ENCODE measurements at regions of chr15 and their contacts with region 1.

Region 1: GRCh38 chr15:70670680-70671079 is 92.7 kb downstream of the UACA start:
- DNase-seq: peak in 2 of 5 donors; percentile 14 to 18
- H3K4me3 ChIP-seq: no peak overlapping the region
- H3K4me3 Mint-ChIP-seq: no peak overlapping the region
- H3K27ac ChIP-seq: no peak overlapping the region
- H3K27ac Mint-ChIP-seq: no peak overlapping the region
- H3K4me1 ChIP-seq: peaks cover 26% of the 10 kb centered on the region
- H3K4me1 Mint-ChIP-seq: peaks cover 15 to 25% (median 18%) of the 10 kb centered on the region in 4 donors
- H3K27me3 ChIP-seq: no peaks in the 10 kb centered on the region
- H3K27me3 Mint-ChIP-seq: peaks cover 2 to 5% of the 10 kb centered on the region in 2 donors

Region 2: DNA sequence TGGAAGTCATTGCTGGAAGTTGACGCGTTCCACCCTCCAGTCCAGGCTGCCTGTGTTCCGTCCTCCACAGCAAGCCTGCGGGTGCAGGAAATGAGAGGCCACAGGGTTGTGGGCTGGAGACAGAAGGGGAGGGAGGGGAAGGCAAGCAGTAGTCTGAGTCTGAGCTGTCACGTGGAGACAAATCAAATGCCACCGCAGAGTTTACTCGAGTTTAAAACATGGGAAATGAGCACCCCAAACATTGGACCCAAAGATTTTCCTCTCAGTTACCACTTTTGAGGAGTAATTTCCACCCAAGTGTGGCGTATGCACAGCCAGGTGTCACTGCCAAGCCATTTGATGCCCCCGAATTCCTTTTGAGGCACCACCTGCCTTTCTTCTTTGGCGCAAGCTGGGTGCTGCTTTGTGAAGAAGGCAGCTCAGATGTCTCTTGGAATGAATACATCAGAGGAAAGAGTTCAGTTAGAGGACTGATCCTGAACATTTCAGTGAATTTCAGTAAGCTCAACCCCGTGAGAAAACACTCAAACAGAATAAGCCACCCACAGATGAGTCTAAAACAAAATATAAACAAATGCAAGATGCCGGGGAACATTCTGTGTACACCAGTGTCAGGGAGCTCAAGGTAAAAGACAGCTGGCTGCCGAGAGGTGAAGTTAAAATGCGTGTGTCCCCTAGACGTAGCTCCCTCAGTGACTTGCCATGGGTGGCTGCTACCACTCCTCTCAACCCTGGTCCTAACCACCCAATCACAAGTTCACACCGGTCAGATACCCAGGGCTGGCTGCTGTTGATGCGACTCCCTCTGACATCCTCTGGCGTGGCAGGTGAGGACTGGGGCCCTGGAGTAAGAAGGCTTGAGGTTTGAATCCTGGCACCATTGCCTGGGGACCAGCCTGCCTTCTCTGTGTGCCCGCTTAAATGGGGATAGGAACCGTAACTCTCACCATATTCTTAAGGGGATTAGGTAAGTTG is 111.1 kb before region 1 on chr15:
- CTCF ChIA-PET with region 1: no interaction called
- POLR2A ChIA-PET with region 1: no interaction called
- intact Hi-C with region 1: loop called (anchors 10 kb)
- DNase-seq: peak; percentile 72 to 87 (median 75)
- H3K4me3 ChIP-seq: peak overlapping the region; percentile 28 to 31
- H3K4me3 Mint-ChIP-seq: peak overlapping the region in 1 of 8 donors; percentile 6
- H3K27ac ChIP-seq: no peak overlapping the region
- H3K27ac Mint-ChIP-seq: peak overlapping the region in 4 of 7 donors; percentile 26 to 82 (median 32)
- H3K4me1 ChIP-seq: peaks cover 64% of the 10 kb centered on the region
- H3K4me1 Mint-ChIP-seq: peaks cover 0 to 13% (median 4%) of the 10 kb centered on the region in 4 donors
- H3K27me3 ChIP-seq: no peaks in the 10 kb centered on the region
- H3K27me3 Mint-ChIP-seq: no peaks in the 10 kb centered on the region

Region 3: GRCh38 chr15:70722266-70723121 is 51.8 kb after region 1 on chr15:
- CTCF ChIA-PET with region 1: interaction called, 43 read pairs
- POLR2A ChIA-PET with region 1: interaction called, 3 read pairs
- intact Hi-C with region 1: loop called (anchors 10 kb)
- DNase-seq: peak in 4 of 5 donors; percentile 25 to 39 (median 30)
- H3K4me3 ChIP-seq: no peak overlapping the region
- H3K4me3 Mint-ChIP-seq: no peak overlapping the region
- H3K27ac ChIP-seq: no peak overlapping the region
- H3K27ac Mint-ChIP-seq: no peak overlapping the region
- H3K4me1 ChIP-seq: no peaks in the 10 kb centered on the region
- H3K4me1 Mint-ChIP-seq: peaks cover 0 to 2% (median 0%) of the 10 kb centered on the region in 4 donors
- H3K27me3 ChIP-seq: no peaks in the 10 kb centered on the region
- H3K27me3 Mint-ChIP-seq: peaks cover 13 to 14% of the 10 kb centered on the region in 2 donors

Region 4: GRCh38 chr15:70810916-70811578 is 140.4 kb after region 1 on chr15:
- CTCF ChIA-PET with region 1: interaction called, 17 read pairs
- POLR2A ChIA-PET with region 1: no interaction called
- intact Hi-C with region 1: loop called (anchors 2 kb)
- DNase-seq: no peak
- H3K4me3 ChIP-seq: no peak overlapping the region
- H3K4me3 Mint-ChIP-seq: no peak overlapping the region
- H3K27ac ChIP-seq: no peak overlapping the region
- H3K27ac Mint-ChIP-seq: no peak overlapping the region
- H3K4me1 ChIP-seq: peaks cover 3% of the 10 kb centered on the region
- H3K4me1 Mint-ChIP-seq: peaks cover 0 to 9% (median 5%) of the 10 kb centered on the region in 4 donors
- H3K27me3 ChIP-seq: no peaks in the 10 kb centered on the region
- H3K27me3 Mint-ChIP-seq: peaks cover 11 to 13% of the 10 kb centered on the region in 2 donors